Posterior vena cava (tissue), 2 donors: ENCODE measurements at regions of chr12 and their contacts with region 1.

Region 1: GRCh38 chr12:54324617-54325441 is at the start of gene COPZ1:
- DNase-seq: peak; percentile 98
- total RNA-seq, gene COPZ1: 80.2 to 80.6 TPM

Region 2: DNA sequence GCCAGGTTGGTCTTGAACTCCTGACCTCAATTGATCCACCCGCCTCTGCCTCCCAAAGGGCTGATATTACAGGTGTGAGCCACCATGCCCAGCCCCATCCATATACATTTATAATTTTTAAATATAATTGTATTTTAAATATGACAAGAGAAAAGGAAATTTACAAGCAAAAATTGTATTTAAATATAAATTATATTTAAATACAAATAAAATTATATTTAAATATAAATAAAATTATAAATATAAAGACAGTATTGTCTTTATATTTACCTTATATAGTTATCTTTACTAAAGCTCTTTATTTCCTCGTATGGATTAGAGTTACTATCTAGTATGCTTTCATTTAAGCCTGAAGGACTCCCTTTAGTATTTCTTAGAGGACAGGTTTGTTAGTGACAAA is 686.8 kb before region 1 on chr12:
- intact Hi-C with region 1: loop called in 1 of 2 experiments (anchors 5 kb)
- DNase-seq: no peak

Region 3: GRCh38 chr12:54262403-54262925 is 62.4 kb before region 1 on chr12:
- intact Hi-C with region 1: no loop called
- DNase-seq: no peak

Region 4: GRCh38 chr12:54282949-54283593 is 41.8 kb before region 1 on chr12:
- intact Hi-C with region 1: loop called in 1 of 2 experiments (anchors 2 kb)
- DNase-seq: no peak

Region 5: DNA sequence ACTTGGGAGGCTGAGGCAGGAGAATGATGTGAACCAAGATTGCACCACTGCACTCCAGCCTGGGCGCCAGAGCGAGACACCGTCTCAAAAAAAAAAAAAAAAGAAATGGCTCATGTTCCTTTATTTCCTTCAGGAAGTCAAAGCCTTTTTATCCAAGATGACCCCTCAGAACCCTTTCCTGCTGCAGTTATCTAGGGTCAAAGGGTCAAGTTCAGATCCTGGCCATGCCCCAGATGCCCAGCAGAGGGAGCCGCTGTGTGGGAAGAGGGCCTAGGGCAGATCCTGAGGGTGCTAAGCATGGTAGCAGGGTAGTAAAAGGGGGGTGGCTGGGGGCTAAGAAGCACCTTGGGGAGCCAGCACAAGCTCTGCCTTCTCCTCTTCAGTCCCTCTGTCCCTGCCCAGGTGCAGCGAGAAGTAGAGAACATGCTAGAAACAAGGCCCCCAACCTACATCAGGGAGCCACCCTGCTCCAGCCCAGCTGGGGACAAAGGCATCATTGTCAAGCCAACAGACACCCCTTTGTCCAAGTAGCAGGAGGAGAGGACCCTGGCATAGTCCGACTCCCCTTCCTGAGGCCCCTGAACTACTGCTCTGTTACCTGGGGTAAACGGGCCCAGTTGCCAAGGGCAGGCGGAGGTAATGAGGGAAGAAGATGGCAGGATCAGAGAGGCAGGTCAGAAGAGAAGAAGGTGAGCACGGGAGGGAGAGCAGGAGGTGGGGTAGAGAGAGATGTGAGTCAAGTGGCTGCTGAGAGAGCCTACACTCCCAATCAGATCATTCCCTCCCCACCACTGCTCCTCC is 30.5 kb before region 1 on chr12:
- intact Hi-C with region 1: no loop called
- DNase-seq: peak; percentile 85